AG04449 (cell line): ENCODE measurements at regions of chr6 and their contacts with region 1.

Region 1: DNA sequence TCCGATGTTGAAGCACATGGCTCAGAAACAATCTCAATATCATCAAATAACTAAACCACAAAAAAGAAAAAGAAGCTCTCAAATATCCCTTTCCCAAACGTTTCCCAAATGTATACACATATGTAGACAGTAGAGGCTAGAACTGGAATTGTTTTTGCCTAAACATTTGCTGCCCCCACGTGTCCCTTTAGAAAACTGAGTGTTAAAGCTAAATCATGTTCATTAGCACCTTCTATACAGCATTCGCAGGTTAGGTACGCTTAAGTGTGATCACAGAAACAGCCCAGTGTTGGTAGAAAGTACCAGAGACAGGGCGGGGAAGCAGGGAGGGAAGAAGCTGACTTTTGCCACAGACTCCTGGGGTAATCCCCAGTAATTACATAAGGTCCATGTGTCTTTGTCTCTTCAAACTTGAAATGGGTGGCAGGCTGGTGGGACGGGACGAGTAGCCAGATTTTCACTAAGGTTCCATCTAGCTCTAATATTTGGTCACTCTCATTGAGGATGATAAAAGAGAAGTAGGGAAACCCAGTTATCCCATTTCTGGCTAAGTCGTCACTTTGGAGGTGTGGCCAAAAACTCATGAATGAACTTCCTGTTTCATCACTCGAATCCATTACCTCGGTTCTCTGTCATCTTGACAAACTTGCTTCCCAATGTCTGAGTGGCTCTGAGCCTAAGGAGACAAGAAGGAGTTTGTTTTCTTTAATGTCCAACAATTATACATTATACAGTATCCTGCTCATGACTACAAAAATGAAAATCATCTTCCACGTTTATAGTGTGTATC is 15.0 kb upstream of the TFAP2A start:
- DNase-seq: no peak
- H3K4me3 ChIP-seq: peak overlapping the region; percentile 23; the same call in 1 of the 2 replicates
- CTCF ChIP-seq: peak; percentile 42

Region 2: GRCh38 chr6:8499540-8499939 is 1930.3 kb before region 1 on chr6:
- CTCF ChIA-PET with region 1: interaction called, 11 read pairs
- POLR2A ChIA-PET with region 1: no interaction called
- DNase-seq: no peak
- H3K4me3 ChIP-seq: no peak overlapping the region
- CTCF ChIP-seq: peak; percentile 4

Region 3: DNA sequence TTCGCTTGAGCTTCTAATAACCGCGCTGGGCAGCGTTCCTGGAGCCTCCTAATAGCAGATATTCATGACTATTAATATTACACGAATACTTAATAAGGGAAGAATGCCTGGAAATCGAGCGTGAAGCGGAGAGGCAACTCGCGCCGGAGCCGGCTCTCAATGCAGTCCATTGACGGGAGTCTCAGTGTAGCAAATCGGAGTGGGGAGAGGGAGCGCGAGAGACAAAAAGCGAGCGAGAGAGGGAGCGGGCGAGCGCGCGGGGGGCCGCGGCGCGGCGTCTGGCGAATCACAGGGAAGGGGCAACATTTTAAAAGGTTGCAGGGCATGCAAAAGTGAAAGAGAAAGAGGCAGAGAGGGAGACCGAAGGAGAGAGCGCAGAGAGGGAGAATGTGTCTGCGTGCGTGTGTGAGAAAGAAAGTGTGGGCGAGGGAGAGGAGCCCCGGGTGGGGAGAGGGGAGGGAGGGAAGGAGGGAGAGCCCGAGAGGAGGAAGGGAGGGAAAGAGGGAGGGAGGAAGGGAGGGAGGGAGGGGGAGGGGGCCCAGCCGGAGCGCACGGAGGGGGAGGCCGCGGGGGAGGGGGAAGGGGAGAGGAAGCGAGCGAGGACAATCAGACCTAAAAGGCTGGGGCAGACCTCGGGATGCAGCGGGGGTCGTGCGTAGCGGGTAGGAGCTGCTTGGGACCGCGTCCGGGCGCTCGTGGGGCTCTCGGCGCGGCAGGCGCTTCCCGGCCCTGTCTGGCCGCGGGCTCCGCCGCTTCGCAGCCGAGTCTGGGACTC is 17.7 kb before region 1 on chr6:
- CTCF ChIA-PET with region 1: interaction called, 47 read pairs
- POLR2A ChIA-PET with region 1: no interaction called
- DNase-seq: no peak
- H3K4me3 ChIP-seq: peak overlapping the region; percentile 62
- CTCF ChIP-seq: no peak

Region 4: DNA sequence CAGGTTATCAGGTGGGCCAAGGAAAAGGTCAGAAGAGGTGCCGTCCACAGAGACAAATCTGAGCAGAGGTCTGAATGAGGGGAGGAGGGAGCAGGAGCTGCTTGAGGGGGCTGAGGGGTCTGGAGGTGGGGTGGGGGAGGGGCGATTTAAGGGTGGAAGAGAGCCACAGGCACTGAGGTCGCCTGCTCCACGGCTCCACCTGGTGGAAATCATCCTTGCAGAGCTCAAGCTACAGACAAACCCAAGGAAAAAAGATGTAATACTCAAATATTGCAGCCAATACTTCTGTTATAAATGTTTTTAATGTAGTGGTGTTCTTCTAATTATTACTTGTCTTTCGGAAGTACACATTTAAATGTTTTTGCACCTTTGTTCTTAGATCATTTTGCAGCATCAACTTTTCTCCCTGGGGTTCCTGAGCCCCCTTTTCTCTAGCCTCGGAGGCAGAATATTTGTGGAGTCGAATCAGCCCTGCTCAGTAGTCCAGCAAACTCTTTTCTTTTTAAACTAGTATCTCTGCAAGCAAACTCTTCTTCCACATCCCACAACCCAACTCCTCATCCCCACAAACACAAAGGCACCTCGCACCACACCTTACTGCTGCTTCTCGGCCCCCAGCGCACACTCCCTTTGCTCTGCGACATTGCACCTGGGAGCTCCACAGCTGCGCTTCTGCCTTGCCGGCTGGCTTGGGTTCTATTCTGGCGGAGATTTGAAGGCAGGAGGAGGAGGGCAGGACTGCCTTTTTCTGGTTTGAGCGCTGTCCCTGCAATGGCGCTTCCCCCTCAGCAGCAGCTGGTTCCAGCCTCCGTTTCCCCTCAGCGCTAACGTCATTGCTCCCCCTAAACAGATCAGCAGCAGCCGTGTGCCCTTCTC is 36.0 kb after region 1 on chr6:
- CTCF ChIA-PET with region 1: no interaction called
- POLR2A ChIA-PET with region 1: no interaction called
- DNase-seq: no peak
- H3K4me3 ChIP-seq: no peak overlapping the region
- CTCF ChIP-seq: peak; percentile 42

Region 5: DNA sequence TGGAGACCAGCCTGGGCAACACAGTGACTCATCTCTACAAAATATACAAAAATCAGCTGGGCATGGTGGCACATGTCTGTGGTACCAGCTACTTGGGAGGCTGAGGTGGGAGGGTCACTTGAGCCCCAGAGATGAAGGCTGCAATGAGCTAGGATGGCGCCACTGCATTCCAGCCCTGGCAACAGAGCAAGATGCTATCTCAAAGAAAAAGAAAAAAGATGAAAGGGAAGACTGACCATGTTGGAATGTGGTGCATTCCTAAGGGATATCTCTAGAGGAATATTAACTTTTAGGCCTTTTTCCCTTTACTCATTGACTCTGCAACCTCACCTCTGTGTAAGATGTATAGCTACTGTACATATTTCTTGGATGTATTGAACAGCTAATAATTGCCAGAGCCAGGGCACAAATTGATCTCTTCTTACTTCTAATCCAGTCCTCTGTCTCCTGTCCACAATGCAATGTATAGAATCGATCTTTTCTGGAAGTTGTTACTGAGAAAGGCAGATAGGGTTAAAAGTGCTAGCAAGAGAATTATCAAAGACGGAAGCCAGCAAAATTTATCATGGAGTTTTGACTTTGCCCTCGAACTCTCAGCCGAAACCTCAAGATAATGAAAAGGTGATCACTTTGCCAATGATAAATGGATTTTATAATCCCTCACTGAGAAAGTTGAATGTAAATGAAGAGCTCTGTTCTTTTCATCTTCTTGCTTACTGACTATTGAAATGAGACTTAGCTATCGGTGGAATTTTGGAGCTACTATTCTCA is 137.6 kb after region 1 on chr6:
- CTCF ChIA-PET with region 1: no interaction called
- POLR2A ChIA-PET with region 1: no interaction called
- DNase-seq: no peak
- H3K4me3 ChIP-seq: no peak overlapping the region
- CTCF ChIP-seq: no peak

Region 6: DNA sequence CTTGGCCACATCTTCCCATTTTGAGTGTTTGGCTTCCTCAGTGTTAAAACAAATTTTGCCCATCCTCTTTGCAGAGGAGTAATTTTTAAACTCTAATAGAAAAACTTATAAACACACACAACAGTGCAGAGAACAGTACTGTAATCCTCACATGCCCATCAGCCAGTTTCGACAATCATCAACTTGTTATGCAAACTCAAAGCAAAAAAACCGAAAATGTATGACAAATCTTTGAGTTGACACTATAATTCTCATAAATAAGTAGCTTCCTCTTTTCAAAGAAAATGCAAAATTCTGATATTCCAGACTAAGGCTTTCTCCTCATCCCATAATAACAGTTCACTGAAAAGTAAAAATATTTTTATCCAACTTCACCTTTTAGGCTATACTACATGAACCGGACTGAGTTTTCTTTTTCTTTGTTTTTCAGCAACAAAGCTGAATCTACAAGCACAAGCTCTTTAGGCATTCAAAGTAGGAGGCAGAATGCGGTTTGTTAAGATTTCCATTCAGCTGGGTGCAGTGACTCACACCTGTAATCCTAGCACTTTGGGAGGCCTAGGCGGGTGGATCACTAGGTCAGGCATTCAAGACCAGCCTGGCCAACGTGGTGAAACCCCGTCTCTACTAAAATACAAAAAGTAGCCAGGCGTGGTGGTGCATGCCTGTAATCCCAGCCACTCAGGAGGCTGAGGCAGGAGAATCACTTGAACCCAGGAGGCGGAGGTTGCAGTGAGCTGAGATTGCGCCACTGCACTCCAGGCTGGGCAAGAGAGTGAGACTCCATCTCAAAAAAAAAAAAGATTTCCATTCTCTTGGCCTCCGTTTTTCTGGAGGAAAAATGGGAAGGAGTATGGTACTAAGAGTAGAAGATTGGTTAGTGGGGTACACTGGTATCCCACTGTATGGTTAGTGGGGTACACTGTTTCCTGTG is 166.2 kb after region 1 on chr6:
- CTCF ChIA-PET with region 1: no interaction called
- POLR2A ChIA-PET with region 1: no interaction called
- DNase-seq: no peak
- H3K4me3 ChIP-seq: no peak overlapping the region
- CTCF ChIP-seq: no peak